Naive thymus-derived CD4-positive, alpha-beta T cell (primary cell): ENCODE measurements at regions of chr2 and their contacts with region 1.

Region 1: GRCh38 chr2:136117909-136118818 is at the start of gene CXCR4:
- DNase-seq: peak; percentile 87 to 97 (median 91)
- ATAC-seq: peak; percentile 51
- H3K4me3 ChIP-seq: peak within 1 kb of the TSS; percentile 89
- H3K4me3 Mint-ChIP-seq: peak within 1 kb of the TSS; percentile 84 to 100 (median 98)
- H3K27ac ChIP-seq: peak within 1 kb of the TSS; percentile 94
- H3K27ac Mint-ChIP-seq: peak within 1 kb of the TSS; percentile 98 to 100 (median 99)
- H3K4me1 ChIP-seq: peaks cover 40 to 44% of the 10 kb centered on the region in 2 donors
- H3K4me1 Mint-ChIP-seq: peaks cover 17 to 69% (median 64%) of the 10 kb centered on the region in 7 donors
- H3K27me3 ChIP-seq: no peaks in the 10 kb centered on the region
- H3K27me3 Mint-ChIP-seq: peaks cover 0 to 39% (median 0%) of the 10 kb centered on the region in 5 donors
- total RNA-seq, gene CXCR4: 239 to 1,323 (median 255) TPM

Region 2: GRCh38 chr2:134918526-134919340 is 1199.4 kb before region 1 on chr2 and contains the start of gene CCNT2:
- CTCF ChIA-PET with region 1: no interaction called
- POLR2A ChIA-PET with region 1: no interaction called
- intact Hi-C with region 1: loop called in 1 of 2 experiments (anchors 2 kb)
- DNase-seq: peak; percentile 99 to 100 (median 100)
- ATAC-seq: peak; percentile 90
- H3K4me3 ChIP-seq: peak within 1 kb of the TSS; percentile 96
- H3K4me3 Mint-ChIP-seq: peak within 1 kb of the TSS; percentile 86 to 98 (median 93)
- H3K27ac ChIP-seq: peak within 1 kb of the TSS; percentile 97
- H3K27ac Mint-ChIP-seq: peak within 1 kb of the TSS; percentile 91 to 99 (median 96)
- H3K4me1 ChIP-seq: peaks cover 31 to 45% of the 10 kb centered on the region in 2 donors
- H3K4me1 Mint-ChIP-seq: peaks cover 18 to 71% (median 48%) of the 10 kb centered on the region in 7 donors
- H3K27me3 ChIP-seq: no peaks in the 10 kb centered on the region
- H3K27me3 Mint-ChIP-seq: peaks cover 0 to 14% (median 0%) of the 10 kb centered on the region in 5 donors
- total RNA-seq, gene CCNT2: 49.8 to 78.1 (median 67.9) TPM

Region 3: DNA sequence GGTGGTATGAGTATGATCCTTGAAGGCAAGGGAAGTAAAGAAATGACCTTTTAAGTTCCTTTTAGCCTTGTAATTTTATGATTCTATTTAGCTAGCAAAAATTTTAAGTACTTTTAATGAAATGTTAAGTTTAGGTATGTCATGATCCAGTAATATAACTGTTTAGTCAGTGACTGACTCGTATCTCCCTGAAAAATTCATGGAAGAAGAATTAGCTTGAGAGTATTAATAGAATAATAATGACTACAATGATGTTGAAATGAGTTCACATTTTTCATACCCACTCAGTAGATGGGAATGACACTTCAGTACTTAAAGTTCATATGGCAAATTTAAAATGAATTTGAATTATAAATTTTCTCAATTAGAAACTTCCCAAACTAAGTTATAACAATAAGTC is 1051.5 kb before region 1 on chr2:
- CTCF ChIA-PET with region 1: no interaction called
- POLR2A ChIA-PET with region 1: no interaction called
- intact Hi-C with region 1: no loop called
- DNase-seq: no peak
- ATAC-seq: no peak
- H3K4me3 ChIP-seq: no peak overlapping the region
- H3K4me3 Mint-ChIP-seq: peak overlapping the region in 3 of 10 donors; percentile 8 to 32 (median 16)
- H3K27ac ChIP-seq: no peak overlapping the region
- H3K27ac Mint-ChIP-seq: peak overlapping the region in 1 of 9 donors; percentile 13
- H3K4me1 ChIP-seq: peaks cover 0 to 8% of the 10 kb centered on the region in 2 donors
- H3K4me1 Mint-ChIP-seq: peaks cover 14 to 78% (median 67%) of the 10 kb centered on the region in 7 donors
- H3K27me3 ChIP-seq: no peaks in the 10 kb centered on the region
- H3K27me3 Mint-ChIP-seq: no peaks in the 10 kb centered on the region

Region 4: DNA sequence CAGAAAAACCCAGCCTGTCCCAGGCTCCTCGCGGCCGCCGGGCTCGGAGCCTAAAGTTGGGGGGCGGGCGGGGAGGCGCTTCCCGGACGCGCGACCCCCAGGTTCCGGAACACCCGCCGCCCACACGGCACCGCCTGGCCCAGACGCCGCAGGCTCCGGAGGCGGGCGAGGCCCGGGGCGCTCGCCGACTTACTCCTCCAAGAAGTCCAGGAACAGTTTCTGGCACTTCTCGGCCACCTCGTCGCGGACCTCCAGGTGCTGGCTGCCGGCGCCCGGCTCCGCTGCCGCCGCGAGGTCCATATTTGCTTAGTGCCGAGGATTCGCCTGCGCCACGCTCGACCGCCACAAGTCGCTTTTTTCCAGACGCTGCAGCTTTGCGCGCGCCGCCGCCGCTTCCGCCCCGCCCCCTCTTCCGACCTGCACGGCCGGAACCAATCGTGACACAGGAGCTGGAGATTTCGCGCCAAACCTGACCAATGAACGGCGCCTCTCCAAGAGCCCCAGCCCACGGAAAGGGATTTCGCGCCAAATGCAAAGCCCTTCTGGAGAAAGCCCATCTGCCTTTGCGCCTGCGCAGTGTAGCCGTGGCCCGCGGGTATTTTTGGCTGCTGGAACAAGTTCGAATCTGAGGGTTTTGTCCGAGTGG is 242.0 kb before region 1 on chr2 and contains the start of gene MCM6:
- CTCF ChIA-PET with region 1: no interaction called
- POLR2A ChIA-PET with region 1: no interaction called
- intact Hi-C with region 1: loop called (anchors 1 to 2 kb)
- DNase-seq: peak; percentile 91 to 99 (median 97)
- ATAC-seq: peak; percentile 96
- H3K4me3 ChIP-seq: peak within 1 kb of the TSS; percentile 83
- H3K4me3 Mint-ChIP-seq: peak within 1 kb of the TSS; percentile 85 to 97 (median 93)
- H3K27ac ChIP-seq: peak within 1 kb of the TSS; percentile 84
- H3K27ac Mint-ChIP-seq: peak within 1 kb of the TSS; percentile 84 to 97 (median 95)
- H3K4me1 ChIP-seq: peaks cover 12 to 18% of the 10 kb centered on the region in 2 donors
- H3K4me1 Mint-ChIP-seq: peaks cover 23 to 44% (median 41%) of the 10 kb centered on the region in 7 donors
- H3K27me3 ChIP-seq: no peaks in the 10 kb centered on the region
- H3K27me3 Mint-ChIP-seq: peaks cover 0 to 5% (median 0%) of the 10 kb centered on the region in 5 donors
- total RNA-seq, gene MCM6: 12.1 to 105 (median 21.6) TPM

Region 5: DNA sequence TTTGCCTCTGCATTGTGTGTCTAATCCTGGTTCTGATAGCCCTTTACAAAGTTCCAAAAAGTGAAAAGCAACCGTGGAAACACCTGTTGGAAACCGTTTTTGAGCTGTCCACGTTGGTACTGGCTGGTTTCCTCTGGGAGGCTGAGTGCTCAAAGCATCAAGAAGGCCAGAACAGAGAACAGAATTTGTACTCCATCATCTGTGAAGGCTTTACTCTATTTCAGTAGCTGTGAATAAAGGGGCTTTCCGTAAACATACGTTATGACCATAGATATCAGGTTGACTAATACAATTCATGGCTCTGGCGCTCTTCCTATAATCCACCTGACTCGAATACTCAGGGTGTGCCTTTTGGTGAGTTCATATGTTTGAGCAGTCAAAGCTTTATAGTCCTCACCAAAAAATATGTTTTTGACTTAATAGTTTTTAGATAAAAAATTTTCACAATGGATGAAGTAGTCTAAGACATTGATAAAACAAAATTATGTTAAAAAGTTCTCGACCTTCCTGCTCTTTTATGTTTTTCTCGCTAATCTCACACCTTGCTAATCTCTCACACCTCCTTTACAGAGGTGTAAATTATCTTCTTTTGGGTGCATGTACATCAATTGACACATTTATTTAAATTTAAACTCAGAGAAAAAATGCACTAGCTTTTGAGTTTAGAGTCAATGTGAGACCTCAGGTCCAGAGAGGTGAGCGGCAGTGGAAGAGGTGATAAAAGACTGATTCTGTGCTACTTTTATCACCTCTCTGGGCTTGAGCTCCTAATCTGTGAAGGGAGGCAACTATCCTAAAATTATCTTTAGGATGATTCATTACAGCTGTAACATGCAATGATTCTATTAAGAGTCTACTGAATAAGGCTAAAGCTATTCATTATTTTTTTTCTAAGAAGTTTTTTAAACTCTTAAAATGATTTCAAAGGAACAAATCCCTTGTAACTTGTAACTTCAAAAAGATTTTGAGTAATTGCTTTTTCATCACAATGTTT is 65.5 kb before region 1 on chr2:
- CTCF ChIA-PET with region 1: no interaction called
- POLR2A ChIA-PET with region 1: no interaction called
- intact Hi-C with region 1: loop called (anchors 1 kb)
- DNase-seq: no peak
- ATAC-seq: peak; percentile 15
- H3K4me3 ChIP-seq: peak overlapping the region; percentile 12
- H3K4me3 Mint-ChIP-seq: peak overlapping the region; percentile 37 to 85 (median 70)
- H3K27ac ChIP-seq: peak overlapping the region; percentile 50
- H3K27ac Mint-ChIP-seq: peak overlapping the region; percentile 62 to 96 (median 87)
- H3K4me1 ChIP-seq: peaks cover 86 to 92% of the 10 kb centered on the region in 2 donors
- H3K4me1 Mint-ChIP-seq: peaks cover 60 to 93% (median 90%) of the 10 kb centered on the region in 7 donors
- H3K27me3 ChIP-seq: no peaks in the 10 kb centered on the region
- H3K27me3 Mint-ChIP-seq: no peaks in the 10 kb centered on the region

Region 6: DNA sequence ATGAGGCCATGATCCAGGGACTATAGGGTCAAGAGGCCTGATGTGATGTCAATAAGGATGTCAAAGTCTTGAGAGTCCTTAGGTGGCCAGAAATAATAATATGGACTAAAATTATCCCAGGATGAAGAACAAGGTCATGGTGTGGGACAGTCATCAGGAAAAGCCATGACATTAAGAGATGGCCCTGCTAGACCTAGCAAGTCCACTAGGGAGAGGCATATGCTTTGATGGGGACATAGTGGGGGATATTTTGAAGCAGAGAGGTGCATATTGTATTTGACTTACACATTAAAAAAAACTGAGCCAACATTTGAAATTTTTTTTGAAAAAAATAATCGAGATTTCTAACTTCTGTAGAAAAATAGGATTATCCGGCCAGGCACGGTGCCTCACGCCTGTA is 53.1 kb after region 1 on chr2:
- CTCF ChIA-PET with region 1: no interaction called
- POLR2A ChIA-PET with region 1: no interaction called
- intact Hi-C with region 1: loop called in 1 of 2 experiments (anchors 2 kb)
- DNase-seq: no peak
- ATAC-seq: no peak
- H3K4me3 ChIP-seq: no peak overlapping the region
- H3K4me3 Mint-ChIP-seq: peak overlapping the region in 2 of 10 donors; percentile 3 to 23
- H3K27ac ChIP-seq: no peak overlapping the region
- H3K27ac Mint-ChIP-seq: peak overlapping the region in 3 of 9 donors; percentile 17 to 70 (median 18)
- H3K4me1 ChIP-seq: peaks cover 0 to 9% of the 10 kb centered on the region in 2 donors
- H3K4me1 Mint-ChIP-seq: peaks cover 6 to 52% (median 30%) of the 10 kb centered on the region in 7 donors
- H3K27me3 ChIP-seq: no peaks in the 10 kb centered on the region
- H3K27me3 Mint-ChIP-seq: peaks cover 0 to 12% (median 0%) of the 10 kb centered on the region in 5 donors

Region 7: DNA sequence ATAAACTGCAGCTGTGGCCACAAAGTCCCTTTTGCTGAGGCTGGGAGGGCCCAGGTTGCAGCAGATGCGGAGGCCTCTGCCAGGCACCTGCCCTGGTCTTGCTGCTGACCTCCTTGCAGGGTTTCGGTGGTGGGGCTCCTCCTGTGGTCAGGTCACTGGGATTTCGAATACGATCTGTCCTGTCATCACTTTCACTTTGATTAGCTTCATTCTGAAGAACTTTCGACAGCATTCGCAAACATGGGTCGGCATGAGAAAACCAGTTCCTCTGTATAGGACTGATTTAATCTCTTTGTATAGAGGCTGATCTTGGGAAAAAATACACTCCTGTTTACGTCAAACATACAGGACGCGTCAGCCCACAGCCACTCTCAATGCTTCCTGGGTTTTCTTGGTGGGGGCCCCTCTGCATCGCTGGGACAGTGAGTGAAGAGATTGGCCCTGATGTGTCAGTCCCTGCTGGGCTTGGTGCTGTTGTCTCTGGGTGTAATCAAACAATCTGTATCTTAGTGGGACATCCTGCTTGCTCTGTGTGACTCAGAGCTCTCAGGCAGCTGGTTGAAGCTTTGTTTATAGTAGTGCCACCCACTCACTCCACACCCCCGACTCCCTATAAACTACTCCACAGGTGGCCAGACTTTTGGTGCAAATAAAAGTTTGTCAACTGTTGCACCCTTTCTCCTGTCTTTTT is 209.1 kb after region 1 on chr2:
- CTCF ChIA-PET with region 1: no interaction called
- POLR2A ChIA-PET with region 1: interaction called, 7 read pairs
- intact Hi-C with region 1: loop called (anchors 1 kb)
- DNase-seq: peak; percentile 28 to 90 (median 83)
- ATAC-seq: peak; percentile 93
- H3K4me3 ChIP-seq: peak overlapping the region; percentile 38
- H3K4me3 Mint-ChIP-seq: peak overlapping the region; percentile 74 to 89 (median 82)
- H3K27ac ChIP-seq: peak overlapping the region; percentile 74
- H3K27ac Mint-ChIP-seq: peak overlapping the region; percentile 93 to 99 (median 97)
- H3K4me1 ChIP-seq: peaks cover 17 to 44% of the 10 kb centered on the region in 2 donors
- H3K4me1 Mint-ChIP-seq: peaks cover 43 to 73% (median 62%) of the 10 kb centered on the region in 7 donors
- H3K27me3 ChIP-seq: no peaks in the 10 kb centered on the region
- H3K27me3 Mint-ChIP-seq: no peaks in the 10 kb centered on the region

Region 8: DNA sequence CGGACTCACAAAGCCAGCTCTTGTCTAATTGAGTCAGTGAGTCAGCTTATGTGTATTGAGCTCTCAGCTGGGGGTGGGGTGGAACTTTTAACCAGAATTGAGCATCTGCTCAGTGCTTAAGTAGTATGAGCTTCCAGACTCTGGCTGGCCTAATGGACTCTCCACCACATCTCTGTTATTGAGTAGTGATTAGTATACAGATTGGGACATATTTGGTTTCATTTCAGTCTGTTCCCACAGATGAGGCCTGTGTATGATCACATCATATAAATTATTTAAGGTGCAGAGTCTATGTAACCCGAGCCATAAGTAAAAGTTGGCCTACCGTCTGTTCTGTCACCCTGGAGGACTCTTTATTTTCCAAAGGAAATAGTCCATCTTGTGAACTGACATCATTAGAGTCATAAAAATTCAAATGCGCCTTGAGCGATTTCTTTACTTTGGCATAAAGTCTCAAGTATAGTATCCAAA is 799.3 kb after region 1 on chr2:
- CTCF ChIA-PET with region 1: no interaction called
- POLR2A ChIA-PET with region 1: no interaction called
- intact Hi-C with region 1: no loop called
- DNase-seq: no peak
- ATAC-seq: no peak
- H3K4me3 ChIP-seq: no peak overlapping the region
- H3K4me3 Mint-ChIP-seq: no peak overlapping the region
- H3K27ac ChIP-seq: no peak overlapping the region
- H3K27ac Mint-ChIP-seq: no peak overlapping the region
- H3K4me1 ChIP-seq: no peaks in the 10 kb centered on the region
- H3K4me1 Mint-ChIP-seq: no peaks in the 10 kb centered on the region
- H3K27me3 ChIP-seq: no peaks in the 10 kb centered on the region
- H3K27me3 Mint-ChIP-seq: peaks cover 0 to 6% (median 0%) of the 10 kb centered on the region in 5 donors